Gastrocnemius medialis (tissue), 4 donors: ENCODE measurements at regions of chr4 and their contacts with region 1.

Region 1: DNA sequence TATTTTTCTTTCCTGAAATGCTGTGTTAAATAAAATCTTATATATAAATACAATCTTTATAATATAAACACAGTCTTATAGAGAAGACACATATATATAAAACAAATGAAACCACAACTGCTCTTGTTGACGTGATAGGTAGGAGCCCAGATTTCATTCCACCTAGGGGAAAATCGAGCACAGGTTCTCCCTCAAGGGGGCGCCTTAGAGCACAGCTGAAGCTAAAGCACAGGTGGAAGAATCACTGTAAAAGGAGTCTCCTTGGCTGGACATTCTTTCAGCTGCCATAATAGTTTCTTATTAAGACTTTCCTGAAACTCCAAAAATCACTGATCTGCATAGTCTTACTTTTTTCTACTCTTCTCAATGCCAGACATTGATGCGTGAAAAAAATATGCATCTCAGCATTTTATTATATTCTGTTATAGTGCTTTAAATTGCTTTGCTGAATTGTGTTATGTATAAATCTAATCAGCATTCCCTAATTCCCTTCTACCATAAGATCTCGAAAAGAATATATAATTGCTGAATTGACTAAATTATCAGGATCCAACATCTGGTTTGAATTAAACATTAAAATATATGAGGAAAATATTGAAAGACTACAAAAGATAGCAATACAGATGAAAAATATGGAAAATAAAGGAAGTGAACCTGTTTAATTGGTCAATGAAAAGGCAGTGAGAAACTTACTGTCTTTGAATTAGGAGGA is 25.5 kb upstream of the RXFP1 start:
- DNase-seq: no peak
- ATAC-seq: no peak
- H3K4me3 ChIP-seq: no peak overlapping the region
- H3K27ac ChIP-seq: no peak overlapping the region
- H3K4me1 ChIP-seq: no peaks in the 10 kb centered on the region
- H3K27me3 ChIP-seq: no peaks in the 10 kb centered on the region
- CTCF ChIP-seq: peak in 2 of 5 experiments; percentile 20 to 32
- POLR2A ChIP-seq: no peak

Region 2: GRCh38 chr4:157576671-157577217 is 919.4 kb before region 1 on chr4:
- in situ Hi-C with region 1: no loop called
- intact Hi-C with region 1: no loop called
- DNase-seq: no peak
- ATAC-seq: no peak
- H3K4me3 ChIP-seq: no peak overlapping the region
- H3K27ac ChIP-seq: no peak overlapping the region
- H3K4me1 ChIP-seq: no peaks in the 10 kb centered on the region
- H3K27me3 ChIP-seq: no peaks in the 10 kb centered on the region
- CTCF ChIP-seq: no peak
- POLR2A ChIP-seq: no peak

Region 3: GRCh38 chr4:158566860-158567259 is 70.7 kb after region 1 on chr4:
- in situ Hi-C with region 1: no loop called
- intact Hi-C with region 1: no loop called
- DNase-seq: no peak
- ATAC-seq: no peak
- H3K4me3 ChIP-seq: no peak overlapping the region
- H3K27ac ChIP-seq: no peak overlapping the region
- H3K4me1 ChIP-seq: no peaks in the 10 kb centered on the region
- H3K27me3 ChIP-seq: no peaks in the 10 kb centered on the region
- CTCF ChIP-seq: no peak
- POLR2A ChIP-seq: no peak

Region 4: DNA sequence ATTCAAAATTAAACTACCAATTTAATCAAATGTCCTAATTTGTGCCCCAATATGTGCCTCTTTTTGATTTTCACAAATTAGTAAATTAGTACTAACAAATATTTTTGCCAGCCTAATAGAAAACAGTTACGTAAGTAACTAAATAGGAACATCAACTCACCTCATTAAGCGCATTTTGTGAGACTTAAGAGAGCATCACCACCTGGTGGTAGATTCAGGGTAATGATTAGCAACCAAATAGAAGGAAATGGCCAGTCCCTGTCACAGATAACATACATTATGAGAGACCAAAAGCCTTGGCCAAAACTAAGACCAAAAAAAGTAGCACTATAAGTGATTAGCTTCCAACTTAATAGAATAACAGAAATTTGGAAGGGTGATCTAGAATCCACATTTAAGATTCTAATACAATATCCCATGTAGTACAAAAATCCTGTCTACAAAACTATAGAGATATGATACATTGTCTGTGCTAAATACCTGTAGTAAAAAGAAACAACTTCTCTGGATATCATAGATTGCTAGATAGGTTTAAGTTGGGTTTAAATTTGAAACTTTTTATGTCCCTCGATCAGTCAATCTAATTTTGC is 128.8 kb after region 1 on chr4:
- in situ Hi-C with region 1: no loop called
- intact Hi-C with region 1: loop called (anchors 2 kb)
- DNase-seq: peak in 1 of 2 donors; percentile 3
- ATAC-seq: peak; percentile 73 to 82
- H3K4me3 ChIP-seq: peak overlapping the region in 2 of 4 donors; percentile 5 to 9
- H3K27ac ChIP-seq: peak overlapping the region; percentile 55 to 82 (median 70)
- H3K4me1 ChIP-seq: peaks cover 16 to 21% of the 10 kb centered on the region in 2 donors
- H3K27me3 ChIP-seq: no peaks in the 10 kb centered on the region
- CTCF ChIP-seq: peak; percentile 52 to 72 (median 68)
- POLR2A ChIP-seq: no peak

Region 5: GRCh38 chr4:158741326-158742025 is 245.3 kb after region 1 on chr4:
- in situ Hi-C with region 1: no loop called
- intact Hi-C with region 1: no loop called
- DNase-seq: no peak
- ATAC-seq: no peak
- H3K4me3 ChIP-seq: no peak overlapping the region
- H3K27ac ChIP-seq: no peak overlapping the region
- H3K4me1 ChIP-seq: no peaks in the 10 kb centered on the region
- H3K27me3 ChIP-seq: no peaks in the 10 kb centered on the region
- CTCF ChIP-seq: no peak
- POLR2A ChIP-seq: no peak